PC-3 (cell line): ENCODE measurements at regions of chr18 and their contacts with region 1.

Region 1: DNA sequence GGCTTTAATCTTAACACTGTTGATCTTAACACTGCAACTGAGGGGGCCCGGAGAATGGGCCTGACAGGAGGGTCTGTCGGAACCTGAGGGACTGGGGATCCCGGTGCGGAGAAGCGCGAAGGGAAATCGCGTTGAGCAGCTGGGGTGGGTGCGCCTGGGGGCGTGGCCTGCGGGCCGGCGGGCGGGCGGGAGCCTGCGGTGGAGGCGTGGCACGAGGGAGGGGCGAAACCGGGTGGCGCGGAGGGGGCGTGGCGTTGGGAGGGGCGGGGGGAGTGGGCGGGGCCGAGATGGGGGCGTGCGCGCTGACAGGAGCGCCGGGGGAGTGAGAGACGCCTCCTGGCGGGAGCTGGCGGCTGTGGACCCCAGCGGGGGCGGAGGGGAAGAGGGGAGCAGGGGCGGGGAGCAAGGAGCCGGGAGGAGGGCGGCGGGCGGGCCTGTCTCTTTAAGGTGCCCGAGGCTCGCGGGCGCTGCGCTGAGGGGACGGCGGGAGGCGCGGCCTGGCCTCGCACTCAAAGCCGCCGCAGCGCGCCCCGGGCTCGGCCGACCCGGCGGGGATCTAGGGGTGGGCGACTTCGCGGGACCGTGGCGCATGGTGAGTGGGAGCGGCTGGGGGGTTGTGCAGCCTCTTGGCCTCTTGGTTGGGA is at the start of gene TWSG1:
- DNase-seq: peak; percentile 90
- ATAC-seq: peak; percentile 82
- H3K4me3 ChIP-seq: peak within 1 kb of the TSS; percentile 79
- H3K27ac ChIP-seq: peak within 1 kb of the TSS; percentile 30
- H3K4me1 ChIP-seq: peaks cover 42% of the 10 kb centered on the region
- H3K27me3 ChIP-seq: no peaks in the 10 kb centered on the region
- CTCF ChIP-seq: peak; percentile 34
- total RNA-seq, gene TWSG1: 30.1 and 32.8 TPM in 2 replicates

Region 2: GRCh38 chr18:9136315-9137155 is 197.9 kb before region 1 on chr18 and contains the start of gene ANKRD12:
- CTCF ChIA-PET with region 1: interaction called, 3 read pairs
- POLR2A ChIA-PET with region 1: interaction called, 7 read pairs
- intact Hi-C with region 1: loop called (anchors 2 kb)
- DNase-seq: peak; percentile 98
- ATAC-seq: peak; percentile 72
- H3K4me3 ChIP-seq: peak within 1 kb of the TSS; percentile 77
- H3K27ac ChIP-seq: peak within 1 kb of the TSS; percentile 88
- H3K4me1 ChIP-seq: peaks cover 58% of the 10 kb centered on the region
- H3K27me3 ChIP-seq: no peaks in the 10 kb centered on the region
- CTCF ChIP-seq: no peak
- total RNA-seq, gene ANKRD12: 14.5 and 19.1 TPM in 2 replicates

Region 3: DNA sequence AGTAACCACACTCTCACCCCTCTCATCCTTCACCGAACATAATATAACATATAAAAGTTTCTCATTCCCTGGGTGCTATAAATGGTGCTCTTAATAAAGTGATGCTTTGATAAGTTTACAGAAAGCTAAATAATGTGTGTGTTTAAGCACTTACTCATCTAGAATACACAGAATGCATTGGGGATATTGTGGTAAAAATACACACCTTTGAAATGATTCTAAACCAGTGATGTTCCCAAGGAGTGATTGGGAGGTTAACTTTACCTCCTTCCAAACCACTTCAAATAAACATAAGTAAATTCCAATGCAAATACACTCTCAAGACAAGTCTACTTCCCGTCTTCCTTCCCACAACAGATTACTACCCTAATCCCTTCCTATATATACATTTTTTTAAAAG is 85.2 kb before region 1 on chr18:
- CTCF ChIA-PET with region 1: interaction called, 6 read pairs
- POLR2A ChIA-PET with region 1: no interaction called
- intact Hi-C with region 1: loop called (anchors 1 kb)
- DNase-seq: peak; percentile 49
- ATAC-seq: peak; percentile 97
- H3K4me3 ChIP-seq: no peak overlapping the region
- H3K27ac ChIP-seq: no peak overlapping the region
- H3K4me1 ChIP-seq: no peaks in the 10 kb centered on the region
- H3K27me3 ChIP-seq: no peaks in the 10 kb centered on the region
- CTCF ChIP-seq: no peak

Region 4: GRCh38 chr18:9366192-9366591 is 31.7 kb after region 1 on chr18:
- CTCF ChIA-PET with region 1: no interaction called
- POLR2A ChIA-PET with region 1: interaction called, 3 read pairs
- intact Hi-C with region 1: loop called (anchors 2 kb)
- DNase-seq: peak; percentile 90
- ATAC-seq: peak; percentile 48
- H3K4me3 ChIP-seq: no peak overlapping the region
- H3K27ac ChIP-seq: 0 out of 2 replicates have a peak overlapping the region, but pooled peaks have one; percentile 72
- H3K4me1 ChIP-seq: peaks cover 42% of the 10 kb centered on the region
- H3K27me3 ChIP-seq: no peaks in the 10 kb centered on the region
- CTCF ChIP-seq: peak; percentile 79

Region 5: GRCh38 chr18:9380621-9381399 is 46.4 kb after region 1 on chr18:
- CTCF ChIA-PET with region 1: no interaction called
- POLR2A ChIA-PET with region 1: interaction called, 10 read pairs
- intact Hi-C with region 1: no loop called
- DNase-seq: no peak
- ATAC-seq: no peak
- H3K4me3 ChIP-seq: no peak overlapping the region
- H3K27ac ChIP-seq: no peak overlapping the region
- H3K4me1 ChIP-seq: no peaks in the 10 kb centered on the region
- H3K27me3 ChIP-seq: no peaks in the 10 kb centered on the region
- CTCF ChIP-seq: no peak

Region 6: DNA sequence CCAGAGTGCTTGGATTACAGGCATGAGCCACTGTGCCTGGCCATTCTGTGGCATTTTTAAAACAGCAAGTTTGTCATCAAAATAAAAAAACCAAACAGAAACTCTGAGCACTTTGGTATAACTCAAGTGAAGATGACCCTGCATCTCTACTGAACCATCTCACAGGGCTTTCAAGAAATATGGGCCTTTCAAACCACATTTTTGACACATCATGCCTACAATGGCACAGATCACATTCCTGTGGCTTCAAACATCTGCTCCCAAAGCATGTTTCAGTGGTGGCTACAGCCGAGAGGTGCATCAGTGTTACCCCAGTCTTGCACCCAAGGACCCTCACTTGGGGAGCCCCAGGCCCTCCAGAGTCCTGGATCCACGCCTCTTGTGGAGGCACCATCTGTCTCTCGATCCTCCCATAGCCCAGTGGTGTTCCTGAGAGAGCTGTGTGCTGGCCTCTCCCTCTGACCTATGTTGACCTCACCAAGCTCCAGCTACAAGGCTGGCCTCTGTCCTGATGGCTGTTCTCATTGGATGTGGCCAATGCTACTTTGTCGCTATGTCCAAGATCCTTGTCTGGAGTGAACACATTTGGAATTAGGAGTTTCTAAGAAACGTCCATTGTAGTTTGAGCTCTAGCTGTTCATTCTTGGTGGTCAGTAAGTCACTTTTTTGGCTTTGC is 85.6 kb after region 1 on chr18:
- CTCF ChIA-PET with region 1: interaction called, 5 read pairs
- POLR2A ChIA-PET with region 1: no interaction called
- intact Hi-C with region 1: loop called (anchors 10 kb)
- DNase-seq: no peak
- ATAC-seq: no peak
- H3K4me3 ChIP-seq: no peak overlapping the region
- H3K27ac ChIP-seq: no peak overlapping the region
- H3K4me1 ChIP-seq: peaks cover 16% of the 10 kb centered on the region
- H3K27me3 ChIP-seq: no peaks in the 10 kb centered on the region
- CTCF ChIP-seq: no peak

Region 7: GRCh38 chr18:9474983-9475642 is 140.7 kb after region 1 on chr18 and contains the start of gene RALBP1:
- CTCF ChIA-PET with region 1: no interaction called
- POLR2A ChIA-PET with region 1: no interaction called
- intact Hi-C with region 1: loop called (anchors 2 kb)
- DNase-seq: peak; percentile 99
- ATAC-seq: peak; percentile 93
- H3K4me3 ChIP-seq: peak within 1 kb of the TSS; percentile 93
- H3K27ac ChIP-seq: peak within 1 kb of the TSS; percentile 92
- H3K4me1 ChIP-seq: peaks cover 15% of the 10 kb centered on the region
- H3K27me3 ChIP-seq: no peaks in the 10 kb centered on the region
- CTCF ChIP-seq: peak; percentile 33
- total RNA-seq, gene RALBP1: 89.8 and 94.3 TPM in 2 replicates